Activated CD4-positive, alpha-beta T cell treated with anti-CD3 and anti-CD28 coated beads for 36 hours (primary cell): ENCODE measurements at regions of chr4 and their contacts with region 1.

Region 1: GRCh38 chr4:40228497-40229365 is 31.9 kb downstream of the RHOH start:
- DNase-seq: peak; percentile 64
- ATAC-seq: peak; percentile 34
- H3K4me3 Mint-ChIP-seq: peak overlapping the region; percentile 61
- H3K27ac Mint-ChIP-seq: peak overlapping the region; percentile 96
- H3K4me1 Mint-ChIP-seq: peaks cover 93% of the 10 kb centered on the region
- H3K27me3 Mint-ChIP-seq: no peaks in the 10 kb centered on the region

Region 2: GRCh38 chr4:40205259-40206198 is 23.2 kb before region 1 on chr4:
- CTCF ChIA-PET with region 1: interaction called, 33 read pairs
- POLR2A ChIA-PET with region 1: interaction called, 29 read pairs
- intact Hi-C with region 1: loop called (anchors 1 kb)
- DNase-seq: peak; percentile 55
- ATAC-seq: peak; percentile 59
- H3K4me3 Mint-ChIP-seq: peak overlapping the region; percentile 98
- H3K27ac Mint-ChIP-seq: peak overlapping the region; percentile 100
- H3K4me1 Mint-ChIP-seq: peaks cover 62% of the 10 kb centered on the region
- H3K27me3 Mint-ChIP-seq: no peaks in the 10 kb centered on the region

Region 3: GRCh38 chr4:40238700-40239548 is 10.2 kb after region 1 on chr4:
- CTCF ChIA-PET with region 1: interaction called, 14 read pairs
- POLR2A ChIA-PET with region 1: interaction called, 11 read pairs
- intact Hi-C with region 1: loop called in 1 of 2 experiments (anchors 1 kb)
- DNase-seq: peak; percentile 87
- ATAC-seq: peak; percentile 96
- H3K4me3 Mint-ChIP-seq: peak overlapping the region; percentile 76
- H3K27ac Mint-ChIP-seq: peak overlapping the region; percentile 90
- H3K4me1 Mint-ChIP-seq: peaks cover 92% of the 10 kb centered on the region
- H3K27me3 Mint-ChIP-seq: no peaks in the 10 kb centered on the region

Region 4: GRCh38 chr4:40283968-40284367 is 55.2 kb after region 1 on chr4:
- CTCF ChIA-PET with region 1: interaction called, 4 read pairs
- POLR2A ChIA-PET with region 1: interaction called, 7 read pairs
- intact Hi-C with region 1: loop called in 1 of 2 experiments (anchors 1 kb)
- DNase-seq: peak; percentile 89
- ATAC-seq: peak; percentile 94
- H3K4me3 Mint-ChIP-seq: peak overlapping the region; percentile 38
- H3K27ac Mint-ChIP-seq: peak overlapping the region; percentile 96
- H3K4me1 Mint-ChIP-seq: peaks cover 60% of the 10 kb centered on the region
- H3K27me3 Mint-ChIP-seq: no peaks in the 10 kb centered on the region

Region 5: GRCh38 chr4:40369437-40370274 is 140.9 kb after region 1 on chr4:
- CTCF ChIA-PET with region 1: no interaction called
- POLR2A ChIA-PET with region 1: no interaction called
- intact Hi-C with region 1: no loop called
- DNase-seq: no peak
- ATAC-seq: no peak
- H3K4me3 Mint-ChIP-seq: no peak overlapping the region
- H3K27ac Mint-ChIP-seq: no peak overlapping the region
- H3K4me1 Mint-ChIP-seq: no peaks in the 10 kb centered on the region
- H3K27me3 Mint-ChIP-seq: no peaks in the 10 kb centered on the region

Region 6: DNA sequence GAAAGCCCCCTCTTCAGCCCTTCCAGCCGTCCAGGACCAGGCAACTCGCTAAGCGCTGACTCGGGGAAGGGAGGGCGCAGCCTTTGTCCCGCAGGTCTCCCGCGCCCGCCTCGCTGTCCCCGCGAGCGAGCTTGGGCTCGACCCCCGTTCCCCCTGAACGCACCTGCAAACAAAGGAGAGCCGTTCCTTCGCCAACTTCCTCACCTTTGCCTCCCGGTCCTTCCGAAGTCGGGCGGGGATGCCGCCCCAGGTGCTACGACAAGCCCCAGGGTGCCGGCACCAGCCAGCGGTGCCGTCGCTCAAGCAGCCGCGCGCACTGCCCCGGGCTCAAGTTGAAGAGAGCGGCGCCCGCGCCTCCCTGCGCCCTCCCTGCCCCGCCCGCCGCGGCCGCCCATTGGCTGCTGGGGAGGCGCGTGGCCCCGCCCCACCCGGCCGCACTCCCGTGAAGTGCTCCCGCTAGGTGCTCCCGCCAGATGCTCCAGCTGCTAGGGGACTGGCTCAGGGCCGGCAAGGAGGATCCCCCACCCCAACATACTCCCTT is 628.2 kb after region 1 on chr4:
- CTCF ChIA-PET with region 1: no interaction called
- POLR2A ChIA-PET with region 1: no interaction called
- intact Hi-C with region 1: no loop called
- DNase-seq: peak; percentile 79
- ATAC-seq: peak; percentile 99
- H3K4me3 Mint-ChIP-seq: peak overlapping the region; percentile 61
- H3K27ac Mint-ChIP-seq: no peak overlapping the region
- H3K4me1 Mint-ChIP-seq: peaks cover 8% of the 10 kb centered on the region
- H3K27me3 Mint-ChIP-seq: peaks cover 46% of the 10 kb centered on the region